Astrocyte of the cerebellum (primary cell): ENCODE measurements at regions of chr7 and their contacts with region 1.

Region 1: DNA sequence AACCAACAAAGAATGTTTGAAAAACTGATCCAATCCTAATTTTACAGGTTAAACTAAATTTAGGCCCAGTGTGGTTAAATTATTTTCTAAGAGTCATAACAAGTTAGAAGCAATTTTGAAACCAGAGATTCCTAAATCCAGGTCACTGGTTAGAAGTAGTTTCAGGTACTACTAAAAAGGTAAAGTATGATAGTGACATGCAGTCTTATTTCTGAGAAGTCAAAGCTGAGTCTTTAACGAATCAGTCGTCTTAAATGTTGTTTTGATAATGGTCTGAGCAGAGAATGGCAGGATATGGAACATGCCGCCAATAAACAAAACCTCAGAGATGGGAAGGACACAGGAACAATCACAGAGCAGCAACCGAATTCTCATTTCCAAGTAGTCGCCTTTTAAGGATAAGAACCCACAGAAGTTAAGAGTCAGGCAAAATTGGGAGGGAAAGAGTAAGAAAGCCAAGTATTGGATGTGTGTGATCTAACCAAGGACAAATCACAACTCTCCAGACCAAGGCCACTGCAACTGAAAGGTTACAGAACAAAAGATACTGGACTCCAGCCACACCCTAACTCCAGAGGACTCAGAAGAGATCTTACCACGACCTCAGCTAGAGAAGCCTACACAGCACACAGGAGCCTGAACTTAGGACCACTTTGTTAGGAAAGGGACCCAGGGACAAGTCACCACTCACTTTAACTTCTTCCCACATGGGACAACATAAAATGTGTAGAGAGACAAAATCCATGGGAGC is 19.7 kb downstream of the TMEM243 start:
- DNase-seq: no peak
- H3K4me3 ChIP-seq: no peak overlapping the region
- CTCF ChIP-seq: no peak

Region 2: GRCh38 chr7:87173471-87173870 is 26.4 kb before region 1 on chr7:
- in situ Hi-C with region 1: loop called (anchors 5 kb)
- DNase-seq: no peak
- H3K4me3 ChIP-seq: no peak overlapping the region
- CTCF ChIP-seq: no peak